Activated CD4-positive, alpha-beta memory T cell treated with anti-CD3 and anti-CD28 coated beads for 36 hours (primary cell): ENCODE measurements at regions of chr12 and their contacts with region 1.

Region 1: DNA sequence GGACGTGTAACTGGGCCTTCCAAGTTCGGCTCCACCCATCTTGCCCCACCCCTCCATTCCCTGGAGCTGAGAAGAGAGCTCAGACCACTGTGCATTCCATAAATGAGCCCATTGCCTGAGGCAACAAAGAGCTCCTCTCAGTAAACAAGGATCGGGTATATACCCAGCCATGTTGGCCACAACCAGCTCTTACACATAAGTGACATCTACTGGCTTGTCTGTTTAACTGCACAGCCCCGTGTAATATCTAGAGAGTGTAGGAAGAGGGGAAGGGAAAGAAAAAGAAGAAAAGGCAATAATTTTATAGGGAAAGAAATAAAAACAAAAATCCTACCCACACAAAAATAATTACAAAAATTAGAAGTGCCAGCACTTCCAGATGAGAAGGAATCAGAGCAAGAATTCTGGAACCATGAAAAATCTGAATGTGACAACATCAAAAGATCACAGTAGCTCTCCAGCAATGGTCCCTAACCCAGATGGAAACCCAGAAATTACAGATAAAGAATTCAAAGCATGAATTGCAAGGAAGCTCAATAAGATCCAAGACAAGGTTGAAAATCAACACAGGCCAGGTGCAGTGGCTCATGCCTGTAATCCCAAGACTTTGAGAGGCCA is 308.1 kb downstream of the RPAP3 start:
- DNase-seq: peak; percentile 64
- H3K4me3 Mint-ChIP-seq: peak overlapping the region; percentile 45
- H3K27ac Mint-ChIP-seq: peak overlapping the region; percentile 100
- H3K4me1 Mint-ChIP-seq: peaks cover 89% of the 10 kb centered on the region
- H3K27me3 Mint-ChIP-seq: no peaks in the 10 kb centered on the region

Region 2: DNA sequence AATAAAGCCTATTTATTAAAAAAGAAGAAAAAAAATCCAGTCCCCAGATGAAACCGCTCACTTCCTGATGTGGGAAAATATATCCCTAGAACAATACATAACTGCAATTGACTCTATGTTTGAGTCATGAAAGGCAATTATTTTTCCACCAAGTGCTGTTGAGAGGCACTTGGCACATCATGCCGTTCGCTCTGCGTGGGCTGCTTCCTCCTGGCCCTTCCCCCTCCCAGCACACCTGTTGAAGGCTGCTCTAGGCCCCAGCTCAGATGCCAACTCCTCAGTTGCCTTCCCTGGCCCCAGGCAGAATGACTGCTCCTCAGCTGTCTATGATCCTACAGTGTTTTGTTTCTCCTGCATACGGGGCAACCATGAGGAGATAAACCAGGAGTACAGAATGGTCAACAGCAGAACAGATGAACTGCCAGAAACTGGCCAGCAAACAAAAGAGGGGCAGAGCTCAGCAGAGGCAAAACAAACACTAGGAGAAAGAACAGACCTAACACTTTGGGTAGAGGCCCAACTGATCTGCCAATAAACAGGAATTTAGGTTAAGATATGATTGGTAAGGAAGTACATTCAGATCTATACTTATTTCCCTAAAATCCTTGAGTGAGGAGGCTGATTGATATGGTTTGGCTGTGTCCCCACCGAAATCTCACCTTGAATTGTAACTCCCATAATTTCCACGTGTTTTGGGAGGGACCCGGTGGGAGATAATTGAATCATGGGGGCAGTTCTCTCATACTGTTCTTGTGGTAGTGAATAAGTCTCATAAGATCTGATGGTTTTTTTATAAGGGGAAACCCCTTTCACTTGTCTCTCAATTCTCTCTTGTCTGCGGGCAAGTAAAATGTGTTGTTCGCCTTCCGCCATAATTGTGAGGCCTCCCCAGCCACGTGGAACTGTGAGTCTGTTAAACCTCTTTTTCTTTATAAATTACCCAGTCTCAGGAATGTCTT is 1187.6 kb before region 1 on chr12:
- CTCF ChIA-PET with region 1: no interaction called
- POLR2A ChIA-PET with region 1: no interaction called
- intact Hi-C with region 1: loop called (anchors 10 kb)
- DNase-seq: peak; percentile 82
- H3K4me3 Mint-ChIP-seq: peak overlapping the region; percentile 40
- H3K27ac Mint-ChIP-seq: peak overlapping the region; percentile 98
- H3K4me1 Mint-ChIP-seq: peaks cover 74% of the 10 kb centered on the region
- H3K27me3 Mint-ChIP-seq: no peaks in the 10 kb centered on the region

Region 3: GRCh38 chr12:47079468-47079980 is 318.2 kb before region 1 on chr12 and contains the starts of genes AMIGO2 and PCED1B:
- CTCF ChIA-PET with region 1: interaction called, 34 read pairs
- POLR2A ChIA-PET with region 1: interaction called, 3 read pairs
- intact Hi-C with region 1: loop called (anchors 1 kb)
- DNase-seq: peak; percentile 83
- H3K4me3 Mint-ChIP-seq: peak within 1 kb of the TSS; percentile 99
- H3K27ac Mint-ChIP-seq: peak within 1 kb of the TSS; percentile 92
- H3K4me1 Mint-ChIP-seq: peaks cover 72% of the 10 kb centered on the region
- H3K27me3 Mint-ChIP-seq: no peaks in the 10 kb centered on the region
- total RNA-seq, gene AMIGO2: 12.4 to 13.6 TPM
- total RNA-seq, gene PCED1B: 133 to 136 TPM

Region 4: DNA sequence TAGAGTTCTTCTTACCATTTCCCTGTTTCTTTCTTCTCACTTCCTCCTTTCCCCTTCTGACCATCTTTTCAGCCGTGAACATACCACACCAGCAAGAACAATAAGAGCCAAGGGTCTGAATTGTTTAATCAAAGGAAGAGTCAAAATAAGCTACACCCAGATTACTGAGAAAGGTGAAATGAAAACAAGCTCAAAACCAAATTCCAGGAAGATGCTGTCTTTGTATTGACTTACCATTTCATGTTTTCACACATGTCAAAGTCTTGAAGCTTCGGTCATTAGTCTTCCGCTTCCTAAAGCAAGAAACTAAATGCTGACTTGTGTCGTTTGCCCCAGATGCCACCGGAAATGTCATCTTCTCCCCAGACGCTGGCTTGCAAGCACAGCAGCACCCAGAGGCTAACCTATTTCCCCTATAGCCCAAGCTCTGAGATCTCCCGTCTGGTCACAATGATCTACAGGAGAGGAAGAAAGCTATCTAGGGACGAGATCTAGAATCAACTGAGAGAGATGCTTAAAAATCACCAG is 181.6 kb before region 1 on chr12:
- CTCF ChIA-PET with region 1: interaction called, 28 read pairs
- POLR2A ChIA-PET with region 1: interaction called, 207 read pairs
- intact Hi-C with region 1: loop called (anchors 1 kb)
- DNase-seq: peak; percentile 87
- H3K4me3 Mint-ChIP-seq: peak overlapping the region; percentile 85
- H3K27ac Mint-ChIP-seq: peak overlapping the region; percentile 96
- H3K4me1 Mint-ChIP-seq: peaks cover 19% of the 10 kb centered on the region
- H3K27me3 Mint-ChIP-seq: no peaks in the 10 kb centered on the region

Region 5: DNA sequence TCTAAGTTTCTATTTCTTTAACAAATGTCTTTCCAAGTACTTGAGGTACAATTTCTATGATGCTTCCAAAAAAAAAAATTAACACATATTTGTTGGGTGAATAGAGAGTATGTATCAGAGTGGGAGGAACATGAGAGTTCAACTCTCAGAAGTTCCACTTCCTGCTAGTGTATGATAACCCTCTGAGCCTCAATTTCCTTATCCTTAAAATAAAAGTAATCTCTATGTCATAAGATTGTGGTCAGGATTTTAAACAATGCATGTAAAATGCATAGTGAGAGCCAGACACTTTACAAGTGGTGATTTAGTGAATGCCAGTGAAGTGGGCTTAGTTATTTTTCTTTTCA is 47.7 kb before region 1 on chr12:
- CTCF ChIA-PET with region 1: interaction called, 12 read pairs
- POLR2A ChIA-PET with region 1: no interaction called
- intact Hi-C with region 1: loop called (anchors 1 kb)
- DNase-seq: no peak
- H3K4me3 Mint-ChIP-seq: peak overlapping the region; percentile 58
- H3K27ac Mint-ChIP-seq: peak overlapping the region; percentile 100
- H3K4me1 Mint-ChIP-seq: peaks cover 69% of the 10 kb centered on the region
- H3K27me3 Mint-ChIP-seq: no peaks in the 10 kb centered on the region

Region 6: DNA sequence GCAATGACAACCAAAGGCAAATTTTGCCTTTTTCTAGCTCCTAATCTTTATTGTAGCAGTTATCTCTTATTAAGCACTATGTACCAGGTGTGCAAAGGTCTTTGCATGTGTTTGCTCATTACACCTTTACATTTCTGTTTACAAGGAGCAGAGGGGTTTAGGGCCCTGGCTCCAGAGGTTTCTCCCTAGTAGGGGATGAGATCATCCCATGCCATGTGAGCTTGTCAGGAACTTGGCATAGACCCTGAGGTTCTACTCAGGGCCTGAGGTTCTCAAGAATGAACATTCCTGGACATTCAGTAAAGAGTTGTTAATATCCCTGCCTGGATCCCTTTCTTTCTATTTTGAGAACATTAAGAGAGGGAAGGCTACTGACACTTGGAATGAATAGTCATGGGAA is 16.0 kb after region 1 on chr12:
- CTCF ChIA-PET with region 1: interaction called, 28 read pairs
- POLR2A ChIA-PET with region 1: interaction called, 5 read pairs
- intact Hi-C with region 1: loop called (anchors 1 kb)
- DNase-seq: no peak
- H3K4me3 Mint-ChIP-seq: no peak overlapping the region
- H3K27ac Mint-ChIP-seq: peak overlapping the region; percentile 18
- H3K4me1 Mint-ChIP-seq: peaks cover 70% of the 10 kb centered on the region
- H3K27me3 Mint-ChIP-seq: no peaks in the 10 kb centered on the region

Region 7: DNA sequence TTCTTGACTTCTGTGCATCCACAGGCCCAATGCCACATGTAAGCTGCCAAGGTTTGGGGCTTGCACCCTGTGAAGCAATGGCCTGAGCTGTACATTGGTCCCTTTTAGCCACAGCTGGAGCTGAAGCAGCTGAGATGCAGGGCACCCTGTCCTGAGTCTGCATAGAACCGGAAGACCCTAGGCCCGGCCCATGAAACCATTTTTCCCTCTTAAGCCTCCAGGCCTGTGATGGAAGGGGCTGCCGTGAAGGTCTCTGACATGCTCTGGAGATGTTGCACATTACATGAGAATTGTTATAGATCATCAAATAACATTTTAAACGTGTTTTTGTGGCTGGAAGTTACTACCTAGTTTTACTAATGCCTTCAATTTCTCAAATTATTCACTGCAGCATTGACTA is 119.3 kb after region 1 on chr12:
- CTCF ChIA-PET with region 1: no interaction called
- POLR2A ChIA-PET with region 1: no interaction called
- intact Hi-C with region 1: no loop called
- DNase-seq: no peak
- H3K4me3 Mint-ChIP-seq: no peak overlapping the region
- H3K27ac Mint-ChIP-seq: no peak overlapping the region
- H3K4me1 Mint-ChIP-seq: no peaks in the 10 kb centered on the region
- H3K27me3 Mint-ChIP-seq: no peaks in the 10 kb centered on the region